ENCODE measurements at regions of chr19 and their contacts with region 1.

Region 1: GRCh38 chr19:44845612-44846454 is at the start of gene NECTIN2:
- H3K4me3 Mint-ChIP-seq: peak within 1 kb of the TSS; percentile 91
- H3K27ac Mint-ChIP-seq: peak within 1 kb of the TSS; percentile 93
- H3K4me1 Mint-ChIP-seq: peaks cover 50% of the 10 kb centered on the region
- H3K27me3 Mint-ChIP-seq: peaks cover 2% of the 10 kb centered on the region

Region 2: GRCh38 chr19:44570984-44571684 is 274.7 kb before region 1 on chr19:
- intact Hi-C with region 1: loop called (anchors 5 kb)
- H3K4me3 Mint-ChIP-seq: no peak overlapping the region
- H3K27ac Mint-ChIP-seq: no peak overlapping the region
- H3K4me1 Mint-ChIP-seq: peaks cover 39% of the 10 kb centered on the region
- H3K27me3 Mint-ChIP-seq: peaks cover 16% of the 10 kb centered on the region

Region 3: DNA sequence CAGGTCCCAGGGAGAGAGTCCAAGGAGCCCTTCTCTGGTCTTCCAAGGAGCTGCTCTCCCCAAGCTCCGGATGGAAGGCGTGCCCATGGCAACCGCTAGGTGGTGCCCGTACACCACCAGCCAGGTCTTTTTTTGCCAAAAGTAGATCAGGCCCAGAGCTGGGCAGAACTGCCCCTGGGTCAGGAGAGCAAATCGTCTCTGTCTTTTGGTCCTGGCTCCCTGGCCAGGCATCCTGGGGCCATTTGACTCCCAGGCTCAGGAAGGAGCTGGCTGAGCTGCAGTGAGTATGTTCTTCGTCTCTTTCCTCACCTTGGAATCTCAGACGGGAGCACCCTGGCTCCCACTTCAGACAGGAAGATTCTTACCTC is 121.9 kb before region 1 on chr19:
- intact Hi-C with region 1: loop called (anchors 10 kb)
- H3K4me3 Mint-ChIP-seq: peak overlapping the region; percentile 53
- H3K27ac Mint-ChIP-seq: peak overlapping the region; percentile 73
- H3K4me1 Mint-ChIP-seq: peaks cover 84% of the 10 kb centered on the region
- H3K27me3 Mint-ChIP-seq: peaks cover 1% of the 10 kb centered on the region

Region 4: GRCh38 chr19:44800461-44800860 is 45.4 kb before region 1 on chr19:
- intact Hi-C with region 1: loop called (anchors 2 kb)
- H3K4me3 Mint-ChIP-seq: no peak overlapping the region
- H3K27ac Mint-ChIP-seq: no peak overlapping the region
- H3K4me1 Mint-ChIP-seq: peaks cover 9% of the 10 kb centered on the region
- H3K27me3 Mint-ChIP-seq: peaks cover 24% of the 10 kb centered on the region

Region 5: GRCh38 chr19:44890366-44891015 is 44.7 kb after region 1 on chr19:
- intact Hi-C with region 1: loop called (anchors 2 kb)
- H3K4me3 Mint-ChIP-seq: peak overlapping the region; percentile 80
- H3K27ac Mint-ChIP-seq: peak overlapping the region; percentile 87
- H3K4me1 Mint-ChIP-seq: peaks cover 35% of the 10 kb centered on the region
- H3K27me3 Mint-ChIP-seq: no peaks in the 10 kb centered on the region